ENCODE measurements at regions of chr17 and their contacts with region 1.

Region 1: DNA sequence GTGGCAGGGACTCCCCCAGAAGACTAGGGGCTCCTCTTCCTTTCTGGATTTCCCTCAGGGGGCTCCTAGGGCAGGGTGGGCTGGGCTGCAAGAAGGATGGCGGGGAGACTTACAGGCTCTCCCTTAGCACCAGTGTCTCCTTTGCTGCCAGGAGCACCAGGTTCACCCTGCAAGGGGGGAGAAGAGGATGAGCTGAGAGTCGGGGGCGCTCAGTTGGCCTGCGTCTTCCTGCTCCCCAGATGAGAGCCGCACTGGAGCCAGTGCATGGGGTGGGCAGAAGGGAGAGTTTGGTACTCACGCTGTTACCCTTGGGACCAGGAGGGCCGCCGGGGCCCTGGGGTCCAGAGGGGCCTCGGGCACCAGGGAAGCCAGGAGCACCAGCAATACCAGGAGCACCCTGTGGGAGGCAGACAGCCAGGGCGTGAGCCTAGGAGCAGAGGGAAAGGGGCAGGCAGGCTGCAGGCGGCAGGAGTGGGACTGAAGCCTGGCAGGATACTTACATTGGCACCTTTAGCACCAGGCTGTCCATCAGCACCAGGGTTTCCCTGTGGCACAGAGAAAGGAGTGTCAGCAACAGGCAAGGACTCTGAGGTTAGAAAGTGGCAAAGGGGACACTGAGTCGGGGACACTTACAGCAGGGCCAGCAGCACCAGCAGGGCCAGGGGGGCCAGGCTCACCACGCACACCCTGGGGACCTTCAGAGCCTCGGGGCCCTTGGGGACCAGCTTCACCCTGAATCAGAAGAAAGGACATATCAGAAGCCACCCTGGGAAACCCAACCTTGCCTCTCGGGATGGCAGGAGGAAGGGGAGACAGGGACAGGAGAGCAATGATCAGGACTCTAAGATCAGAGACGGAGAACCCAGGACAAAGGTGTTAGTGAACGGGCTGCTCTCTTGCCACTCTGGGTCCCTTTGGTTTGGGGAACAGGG is 6.2 kb downstream of the COL1A1 start:
- DNase-seq: no peak
- ATAC-seq: no peak
- H3K4me3 Mint-ChIP-seq: no peak overlapping the region
- H3K27ac Mint-ChIP-seq: no peak overlapping the region
- H3K4me1 Mint-ChIP-seq: peaks cover 37% of the 10 kb centered on the region
- H3K27me3 Mint-ChIP-seq: peaks cover 9% of the 10 kb centered on the region
- CTCF ChIP-seq: no peak

Region 2: DNA sequence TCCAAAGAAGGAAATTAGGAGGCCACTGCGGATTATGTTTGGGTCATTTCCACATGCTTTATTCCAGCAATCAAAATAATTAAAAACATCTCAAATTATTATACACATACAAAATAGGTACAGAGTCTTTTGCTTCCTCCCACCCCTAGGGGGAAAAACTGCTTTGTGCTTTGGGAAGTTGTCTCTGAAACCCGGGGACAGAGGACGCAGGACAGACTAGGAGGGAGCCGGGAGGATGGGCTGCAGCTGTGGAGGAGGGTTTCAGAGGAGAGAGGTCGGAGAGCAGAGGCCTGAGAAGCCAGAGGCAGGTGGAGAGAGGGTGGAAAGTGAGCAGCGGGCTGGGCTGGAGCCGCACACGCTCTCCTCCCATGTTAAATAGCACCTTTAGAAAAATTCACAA is 11.1 kb before region 1 on chr17:
- CTCF ChIA-PET with region 1: interaction called, 22 read pairs
- POLR2A ChIA-PET with region 1: interaction called, 6 read pairs
- intact Hi-C with region 1: loop called (anchors 1 kb)
- DNase-seq: no peak
- ATAC-seq: peak; percentile 26
- H3K4me3 Mint-ChIP-seq: peak overlapping the region; percentile 61
- H3K27ac Mint-ChIP-seq: peak overlapping the region; percentile 31
- H3K4me1 Mint-ChIP-seq: peaks cover 43% of the 10 kb centered on the region
- H3K27me3 Mint-ChIP-seq: no peaks in the 10 kb centered on the region
- CTCF ChIP-seq: no peak

Region 3: DNA sequence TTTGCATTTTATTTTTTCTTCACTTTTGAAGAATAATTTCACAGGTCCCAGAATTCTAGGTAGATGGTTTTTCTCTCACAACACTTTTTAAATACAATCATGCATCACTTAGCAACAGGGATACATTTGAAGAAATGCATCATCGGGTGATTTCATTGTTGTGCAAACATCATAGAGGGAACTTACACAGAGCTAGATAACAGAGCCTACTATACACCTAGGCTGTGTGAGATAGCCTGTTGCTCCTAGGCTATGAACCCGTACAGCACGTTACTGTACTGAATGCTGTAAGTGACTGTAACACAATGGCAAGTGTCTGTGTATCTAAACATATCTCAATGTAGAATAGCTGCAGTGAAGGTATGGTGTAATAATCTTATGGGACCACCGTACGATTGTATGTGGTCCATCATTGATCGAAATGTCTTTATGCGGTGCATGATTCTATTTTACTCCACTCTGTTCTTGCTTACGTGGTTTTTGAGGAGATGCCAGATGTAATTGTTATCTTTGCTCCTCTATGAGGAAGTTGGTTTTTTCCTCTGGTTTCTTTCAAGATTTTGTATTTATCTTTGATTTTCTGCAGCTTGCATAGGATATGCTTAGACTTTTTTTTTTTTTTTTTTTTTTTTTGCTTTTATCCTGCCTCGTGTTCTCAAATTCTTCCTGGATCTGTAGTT is 43.5 kb after region 1 on chr17:
- CTCF ChIA-PET with region 1: no interaction called
- POLR2A ChIA-PET with region 1: no interaction called
- intact Hi-C with region 1: no loop called
- DNase-seq: no peak
- ATAC-seq: no peak
- H3K4me3 Mint-ChIP-seq: no peak overlapping the region
- H3K27ac Mint-ChIP-seq: no peak overlapping the region
- H3K4me1 Mint-ChIP-seq: no peaks in the 10 kb centered on the region
- H3K27me3 Mint-ChIP-seq: peaks cover 47% of the 10 kb centered on the region
- CTCF ChIP-seq: no peak

Measured in activated B cell treated with CpG ODN at 0.5 μM for 24 hours (primary cell).